ENCODE measurements at regions of chr20 and their contacts with region 1.

Region 1: DNA sequence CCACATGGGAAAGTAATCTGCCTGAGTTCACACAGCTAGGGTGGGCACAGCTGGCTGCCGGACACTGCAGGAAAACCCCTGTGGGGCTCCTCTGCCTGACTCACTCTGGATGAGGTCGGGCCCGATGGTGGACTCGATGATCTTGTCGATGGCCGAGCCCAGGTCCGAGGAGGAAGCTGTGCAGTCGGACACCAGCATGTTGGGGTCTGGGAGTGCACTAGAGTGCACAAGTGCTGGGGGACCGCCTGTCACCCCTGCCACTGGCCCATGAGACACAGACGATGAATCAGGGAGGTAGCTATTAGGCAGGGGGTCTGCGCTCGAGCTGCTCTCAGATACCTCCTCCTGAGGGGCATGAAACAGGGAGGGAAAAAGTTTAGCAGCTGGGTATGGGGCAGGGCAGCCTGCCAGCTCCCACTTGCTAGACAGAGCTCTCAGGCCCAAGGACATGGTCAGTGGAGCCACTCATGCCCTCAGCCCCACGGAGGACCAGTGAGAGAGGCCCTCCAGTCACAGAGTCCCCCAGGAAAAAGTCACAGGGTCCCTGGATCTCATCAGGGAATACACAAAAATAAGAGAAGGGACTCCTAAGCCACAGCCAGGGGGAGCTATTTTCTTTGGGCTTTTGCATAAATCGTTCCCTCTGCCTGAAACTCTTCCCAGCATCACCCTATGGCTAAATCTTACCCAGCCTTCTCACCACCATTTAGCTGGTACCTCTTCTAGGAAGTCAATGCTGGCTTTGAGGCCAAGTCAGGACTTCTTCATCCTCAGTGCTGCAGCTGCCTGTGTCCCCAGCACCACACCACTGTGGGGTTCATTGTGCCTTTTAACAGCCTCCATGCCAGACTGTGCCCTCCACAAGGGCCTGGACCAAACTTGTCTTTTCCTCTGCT is 2.4 kb downstream of the ZNF335 start:
- DNase-seq: no peak
- ATAC-seq: no peak

Region 2: DNA sequence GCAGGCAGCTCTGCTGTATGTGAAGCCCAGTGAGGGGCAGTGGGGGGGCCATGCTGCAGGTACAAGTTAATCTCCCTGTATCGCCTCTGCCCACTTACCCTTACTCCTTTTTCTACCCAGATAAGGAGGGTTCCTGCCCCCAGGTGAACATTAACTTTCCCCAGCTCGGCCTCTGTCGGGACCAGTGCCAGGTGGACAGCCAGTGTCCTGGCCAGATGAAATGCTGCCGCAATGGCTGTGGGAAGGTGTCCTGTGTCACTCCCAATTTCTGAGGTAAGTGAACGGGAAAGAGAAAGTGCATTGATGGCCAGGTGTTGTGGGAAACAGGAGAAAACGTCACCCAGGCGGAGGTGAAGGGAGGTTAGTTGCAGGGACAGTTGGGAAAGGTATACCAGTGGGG is 489.8 kb before region 1 on chr20:
- intact Hi-C with region 1: no loop called
- DNase-seq: no peak
- ATAC-seq: no peak

Region 3: DNA sequence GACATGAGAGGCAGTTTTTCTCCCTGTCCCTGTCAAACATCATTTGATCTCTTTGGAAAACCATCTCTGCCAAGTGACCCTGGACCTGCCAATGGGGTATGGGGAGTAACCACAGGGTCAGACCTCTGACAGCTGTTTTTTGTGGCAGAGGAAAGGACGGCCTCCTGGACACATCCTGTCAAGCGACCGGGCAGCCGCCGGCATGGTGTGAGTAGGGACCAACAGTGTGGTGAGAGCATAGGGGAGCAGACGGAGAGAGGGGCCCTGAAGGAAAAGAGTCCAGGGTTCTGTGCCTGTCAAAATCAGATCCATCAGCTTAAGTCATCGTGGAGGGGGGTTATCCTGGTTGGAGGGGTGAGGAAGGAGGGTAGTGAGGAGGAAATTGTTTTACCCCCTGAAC is 167.7 kb before region 1 on chr20:
- intact Hi-C with region 1: loop called in 1 of 2 experiments (anchors 10 kb)
- DNase-seq: no peak
- ATAC-seq: no peak